ENCODE measurements at regions of chr17 and their contacts with region 1.

Region 1: GRCh38 chr17:60819447-60820130 is 141.9 kb downstream of the BCAS3 start:
- DNase-seq: no peak
- H3K4me3 ChIP-seq: no peak overlapping the region
- H3K27ac ChIP-seq: no peak overlapping the region
- H3K4me1 ChIP-seq: no peaks in the 10 kb centered on the region
- H3K27me3 ChIP-seq: no peaks in the 10 kb centered on the region
- CTCF ChIP-seq: no peak

Region 2: GRCh38 chr17:61399131-61400057 is 579.8 kb after region 1 on chr17 and contains the start of gene TBX2:
- CTCF ChIA-PET with region 1: no interaction called
- POLR2A ChIA-PET with region 1: no interaction called
- intact Hi-C with region 1: no loop called
- DNase-seq: peak; percentile 74 to 77
- H3K4me3 ChIP-seq: peak within 1 kb of the TSS; percentile 88
- H3K27ac ChIP-seq: no peak within 1 kb of the TSS
- H3K4me1 ChIP-seq: no peaks in the 10 kb centered on the region; the same call in 1 of the 2 replicates
- H3K27me3 ChIP-seq: no peaks in the 10 kb centered on the region
- CTCF ChIP-seq: no peak
- total RNA-seq, gene TBX2: 0.44 and 0.60 TPM in 2 replicates

Region 3: GRCh38 chr17:62388856-62389255 is 1569.3 kb after region 1 on chr17:
- CTCF ChIA-PET with region 1: no interaction called
- POLR2A ChIA-PET with region 1: interaction called, 10 read pairs
- intact Hi-C with region 1: no loop called
- DNase-seq: no peak
- H3K4me3 ChIP-seq: no peak overlapping the region
- H3K27ac ChIP-seq: no peak overlapping the region
- H3K4me1 ChIP-seq: no peaks in the 10 kb centered on the region
- H3K27me3 ChIP-seq: 0 out of 2 replicates have a peak, but pooled peaks cover 3% of the 10 kb centered on the region
- CTCF ChIP-seq: no peak

Measured in PC-9 (cell line).